ENCODE measurements at regions of chr21 and their contacts with region 1.

Region 1: GRCh38 chr21:34888569-34889319 is 160.4 kb downstream of the RUNX1 start:
- DNase-seq: peak; percentile 86
- H3K4me3 Mint-ChIP-seq: peak overlapping the region; percentile 90
- H3K27ac Mint-ChIP-seq: peak overlapping the region; percentile 98
- H3K4me1 Mint-ChIP-seq: peaks cover 44% of the 10 kb centered on the region
- H3K27me3 Mint-ChIP-seq: peaks cover 2% of the 10 kb centered on the region

Region 2: DNA sequence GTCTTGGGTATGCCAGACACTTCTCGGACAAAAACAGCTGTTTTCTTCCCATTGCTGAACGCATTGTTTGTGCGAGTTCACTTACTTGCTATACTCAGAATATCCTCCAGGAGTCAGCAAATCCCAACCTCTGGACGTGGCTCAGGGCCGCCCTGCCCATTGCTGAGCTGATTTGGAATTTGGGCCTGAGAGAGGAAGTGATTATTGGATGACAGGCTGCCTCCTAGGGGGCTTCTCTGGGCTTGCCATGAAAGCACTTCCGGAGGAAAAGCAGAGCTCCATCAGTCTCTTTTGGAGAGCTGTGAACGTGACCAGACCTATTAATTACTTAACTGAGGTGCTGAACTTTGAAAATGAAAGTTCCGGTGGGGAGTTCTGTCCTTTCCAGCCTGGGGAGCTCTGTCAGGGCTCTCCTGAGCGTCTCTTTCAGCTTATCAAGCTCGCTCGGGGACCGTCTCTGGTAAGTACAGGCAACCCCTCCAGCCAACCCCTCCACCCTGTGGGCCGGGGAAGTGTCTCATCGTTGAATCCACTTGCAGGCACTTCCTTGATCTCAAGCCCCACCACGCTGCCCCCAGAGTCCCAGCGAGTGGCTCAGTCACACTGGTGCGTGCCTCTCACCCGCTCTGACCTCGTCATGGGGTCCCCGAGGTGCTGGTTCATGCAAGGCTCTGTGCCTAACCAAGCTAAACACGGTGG is 143.0 kb before region 1 on chr21:
- CTCF ChIA-PET with region 1: interaction called, 13 read pairs
- POLR2A ChIA-PET with region 1: interaction called, 11 read pairs
- DNase-seq: peak; percentile 63
- H3K4me3 Mint-ChIP-seq: peak overlapping the region; percentile 3
- H3K27ac Mint-ChIP-seq: no peak overlapping the region
- H3K4me1 Mint-ChIP-seq: peaks cover 4% of the 10 kb centered on the region
- H3K27me3 Mint-ChIP-seq: peaks cover 25% of the 10 kb centered on the region

Region 3: DNA sequence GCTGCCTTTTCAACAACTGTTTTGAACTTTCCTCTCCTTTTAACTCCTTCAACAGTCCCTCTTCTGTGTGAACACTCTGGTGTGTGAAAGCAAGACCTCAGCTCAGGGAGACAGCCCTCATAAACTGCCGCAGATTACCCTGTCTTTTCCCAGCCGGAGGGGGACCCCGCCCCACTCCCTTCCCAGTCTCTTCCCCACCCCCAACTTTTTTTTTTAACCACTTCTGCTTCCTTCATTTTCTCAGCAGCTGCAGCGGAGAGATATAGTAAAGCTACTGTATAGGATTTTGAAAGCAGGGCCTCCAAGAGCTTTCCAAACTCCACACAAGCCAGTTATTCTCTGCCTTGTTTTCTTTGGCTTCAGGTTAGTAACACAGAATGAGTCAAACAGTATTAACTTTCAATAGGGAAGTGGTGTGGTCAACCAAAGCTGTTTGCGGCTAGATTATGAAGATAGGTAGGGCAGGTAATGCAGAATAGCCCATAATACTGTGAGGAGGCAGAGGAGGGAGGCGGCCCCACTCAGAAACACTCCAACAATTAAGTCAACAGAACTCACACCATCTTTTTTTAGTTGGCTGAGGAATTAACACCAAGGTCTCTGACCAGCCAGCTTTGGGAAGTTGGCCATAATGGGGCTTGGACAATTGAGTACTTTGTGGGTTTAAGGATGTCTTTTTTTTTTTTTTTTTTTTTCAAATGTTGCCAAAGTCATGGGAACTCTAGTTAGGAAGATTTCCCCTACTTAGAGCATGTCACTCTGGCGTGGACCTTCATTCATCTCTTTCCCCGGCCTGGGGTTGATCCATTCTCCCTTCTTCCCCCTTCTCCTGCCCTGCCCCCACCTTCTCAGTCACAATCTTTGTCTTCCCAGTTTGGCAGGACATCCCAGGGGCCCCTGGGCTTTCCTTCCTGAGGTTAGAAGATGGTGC is 43.0 kb before region 1 on chr21:
- CTCF ChIA-PET with region 1: interaction called, 4 read pairs
- POLR2A ChIA-PET with region 1: interaction called, 24 read pairs
- DNase-seq: peak; percentile 83
- H3K4me3 Mint-ChIP-seq: peak overlapping the region; percentile 21
- H3K27ac Mint-ChIP-seq: no peak overlapping the region
- H3K4me1 Mint-ChIP-seq: peaks cover 40% of the 10 kb centered on the region
- H3K27me3 Mint-ChIP-seq: peaks cover 2% of the 10 kb centered on the region

Region 4: DNA sequence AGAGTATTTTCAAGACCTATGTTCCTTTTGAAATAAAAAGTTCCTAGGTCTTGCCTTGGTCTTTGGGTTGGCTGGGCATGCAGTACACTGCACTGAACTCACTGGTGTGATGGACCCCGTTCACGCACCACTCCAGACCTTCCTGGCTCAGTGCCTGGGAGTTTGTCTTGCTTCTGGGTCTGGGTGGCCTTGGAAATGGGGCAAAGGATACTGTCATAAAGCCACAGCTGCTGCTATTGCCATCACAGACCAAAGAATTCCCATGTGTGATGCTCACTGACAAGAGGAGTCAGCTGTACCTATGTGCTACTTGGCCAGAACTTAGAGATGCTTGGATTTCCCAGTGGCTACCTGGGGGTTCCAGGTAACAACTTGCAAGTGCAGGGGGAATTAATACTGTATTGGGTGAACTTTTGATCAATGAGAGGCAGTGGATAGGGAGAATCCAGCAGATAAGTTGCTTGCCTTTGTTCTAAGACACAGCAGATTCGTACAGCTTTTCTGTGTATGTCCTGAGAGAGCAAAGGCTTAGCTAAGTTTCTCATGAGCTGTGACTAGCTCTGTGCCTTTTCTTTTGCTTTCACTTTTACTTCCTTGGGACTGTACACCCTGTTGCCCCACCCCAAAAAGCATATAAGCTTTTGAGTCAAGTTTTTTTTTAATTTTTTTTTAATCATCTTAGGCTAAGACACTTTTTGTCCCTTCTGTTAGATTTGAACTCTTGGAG is 45.0 kb after region 1 on chr21:
- CTCF ChIA-PET with region 1: interaction called, 19 read pairs
- POLR2A ChIA-PET with region 1: interaction called, 48 read pairs
- DNase-seq: no peak
- H3K4me3 Mint-ChIP-seq: peak overlapping the region; percentile 63
- H3K27ac Mint-ChIP-seq: peak overlapping the region; percentile 95
- H3K4me1 Mint-ChIP-seq: peaks cover 79% of the 10 kb centered on the region
- H3K27me3 Mint-ChIP-seq: no peaks in the 10 kb centered on the region

Region 5: GRCh38 chr21:34974162-34974981 is 85.6 kb after region 1 on chr21:
- CTCF ChIA-PET with region 1: interaction called, 13 read pairs
- POLR2A ChIA-PET with region 1: interaction called, 27 read pairs
- DNase-seq: peak; percentile 64
- H3K4me3 Mint-ChIP-seq: peak overlapping the region; percentile 60
- H3K27ac Mint-ChIP-seq: peak overlapping the region; percentile 80
- H3K4me1 Mint-ChIP-seq: peaks cover 78% of the 10 kb centered on the region
- H3K27me3 Mint-ChIP-seq: peaks cover 9% of the 10 kb centered on the region

Region 6: DNA sequence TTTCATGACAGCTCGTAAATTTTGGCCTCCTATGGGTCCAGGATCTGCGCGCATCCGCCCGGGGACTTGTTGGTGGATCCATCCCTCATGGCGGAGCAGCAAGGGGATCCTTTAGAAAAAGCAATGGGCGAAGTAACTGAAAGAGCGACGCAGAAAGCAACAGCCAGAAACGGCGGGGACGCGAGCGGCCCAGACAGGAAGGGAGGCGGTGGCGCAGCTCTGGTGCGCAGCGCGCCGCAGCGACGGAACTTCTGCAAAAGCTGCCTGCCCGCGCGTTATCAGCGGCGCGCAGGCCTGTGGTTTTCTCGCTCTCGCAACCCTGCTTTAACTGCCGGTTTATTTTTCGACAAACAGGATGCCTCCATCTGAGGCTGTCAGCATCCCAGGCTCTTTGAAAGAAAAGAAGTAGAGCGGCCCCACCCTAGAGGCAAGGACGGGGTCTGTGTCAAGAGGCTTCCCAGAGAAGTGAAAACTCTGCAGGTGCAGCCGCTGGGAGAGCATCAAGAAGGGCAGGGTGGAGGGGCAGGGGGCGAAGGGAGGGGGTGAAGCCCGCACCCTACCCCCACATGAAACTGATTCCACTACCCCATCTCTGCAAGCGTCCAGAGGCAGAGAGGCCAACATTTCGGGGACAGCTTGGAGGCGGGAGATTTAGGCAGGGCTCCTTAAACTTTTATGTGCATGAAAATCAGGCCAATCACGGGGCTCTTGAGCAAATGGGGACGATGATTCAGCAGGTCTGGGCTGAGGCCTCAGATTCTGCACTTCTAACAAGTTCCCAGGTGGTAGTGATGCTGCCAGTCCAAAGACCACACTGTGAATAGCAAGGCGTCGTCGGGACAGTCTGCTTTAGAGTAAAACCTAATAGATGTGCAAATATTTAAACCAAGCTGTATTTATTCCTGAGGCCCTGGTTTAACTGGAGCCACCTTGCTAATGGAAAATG is 138.1 kb after region 1 on chr21:
- CTCF ChIA-PET with region 1: interaction called, 9 read pairs
- POLR2A ChIA-PET with region 1: interaction called, 127 read pairs
- DNase-seq: peak; percentile 91
- H3K4me3 Mint-ChIP-seq: peak overlapping the region; percentile 69
- H3K27ac Mint-ChIP-seq: peak overlapping the region; percentile 98
- H3K4me1 Mint-ChIP-seq: peaks cover 82% of the 10 kb centered on the region
- H3K27me3 Mint-ChIP-seq: no peaks in the 10 kb centered on the region

Region 7: GRCh38 chr21:35051287-35051818 is 162.6 kb after region 1 on chr21:
- CTCF ChIA-PET with region 1: interaction called, 161 read pairs
- POLR2A ChIA-PET with region 1: interaction called, 623 read pairs
- DNase-seq: peak; percentile 89
- H3K4me3 Mint-ChIP-seq: peak overlapping the region; percentile 24
- H3K27ac Mint-ChIP-seq: peak overlapping the region; percentile 99
- H3K4me1 Mint-ChIP-seq: peaks cover 37% of the 10 kb centered on the region
- H3K27me3 Mint-ChIP-seq: peaks cover 1% of the 10 kb centered on the region

Measured in activated CD4-positive, alpha-beta memory T cell treated with anti-CD3 and anti-CD28 coated beads, Interleukin-2, amount 10 ng/mL, durations not matched to agents 7 days and 5 days (primary cell).